Esophagus muscularis mucosa (tissue), 4 donors: ENCODE measurements at regions of chr9 and their contacts with region 1.

Region 1: DNA sequence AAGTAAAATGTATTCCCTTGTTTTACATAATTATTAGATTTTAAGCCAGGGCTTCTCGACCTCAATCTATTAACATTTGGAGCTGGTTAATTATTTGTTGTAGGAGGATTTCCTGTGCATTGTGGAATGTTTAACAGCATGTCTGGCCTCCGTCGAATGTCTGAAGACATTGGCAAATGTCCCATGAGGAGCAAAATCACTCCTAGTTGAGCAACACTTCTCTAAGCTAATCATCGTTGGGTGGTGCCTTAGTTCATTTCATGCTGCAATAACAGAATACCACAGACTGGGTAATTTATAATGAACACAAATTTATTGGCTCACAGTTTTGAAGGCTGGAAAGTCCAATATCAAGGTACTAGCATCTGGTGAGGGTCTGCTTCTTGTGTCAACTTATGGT is 13.4 kb upstream of the VPS13A start:
- DNase-seq: no peak
- H3K4me3 ChIP-seq: no peak overlapping the region
- H3K27ac ChIP-seq: no peak overlapping the region
- H3K4me1 ChIP-seq: peaks cover 0 to 6% (median 5%) of the 10 kb centered on the region in 4 donors
- H3K27me3 ChIP-seq: no peaks in the 10 kb centered on the region
- CTCF ChIP-seq: no peak
- EP300 ChIP-seq: no peak
- POLR2A ChIP-seq: no peak

Region 2: DNA sequence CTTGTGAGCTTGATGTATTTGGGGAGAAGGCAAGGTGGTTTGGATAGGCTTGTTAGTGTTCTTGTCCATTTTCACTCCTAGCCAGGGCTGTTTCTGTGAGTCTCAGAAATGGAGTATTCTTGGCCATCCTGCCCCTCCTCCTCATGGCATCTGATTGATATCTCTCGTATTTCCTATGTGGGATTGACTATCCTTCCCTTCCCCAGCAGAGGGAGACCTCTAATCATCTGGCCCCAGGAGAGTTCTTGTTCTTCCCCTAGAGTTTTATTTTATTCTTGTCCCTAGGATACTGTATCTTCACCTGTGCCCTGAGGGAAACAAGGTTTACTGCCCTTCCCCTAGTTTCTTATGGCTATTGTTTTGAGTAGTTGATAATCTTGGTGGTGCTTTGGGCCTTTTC is 127.8 kb after region 1 on chr9:
- intact Hi-C with region 1: loop called (anchors 10 kb)
- DNase-seq: no peak
- H3K4me3 ChIP-seq: no peak overlapping the region
- H3K27ac ChIP-seq: no peak overlapping the region
- H3K4me1 ChIP-seq: peaks cover 0 to 17% (median 8%) of the 10 kb centered on the region in 4 donors
- H3K27me3 ChIP-seq: no peaks in the 10 kb centered on the region
- CTCF ChIP-seq: peak in 1 of 3 experiments; percentile 22
- EP300 ChIP-seq: no peak
- POLR2A ChIP-seq: no peak